Activated B cell treated with CpG ODN at 0.5 μM for 24 hours (primary cell): ENCODE measurements at regions of chr19 and their contacts with region 1.

Region 1: GRCh38 chr19:18919086-18919899 is at the starts of genes COPE and DDX49:
- DNase-seq: peak; percentile 94
- ATAC-seq: peak; percentile 96
- H3K4me3 Mint-ChIP-seq: peak within 1 kb of the TSS; percentile 91
- H3K27ac Mint-ChIP-seq: peak within 1 kb of the TSS; percentile 60
- H3K4me1 Mint-ChIP-seq: peaks cover 46% of the 10 kb centered on the region
- H3K27me3 Mint-ChIP-seq: no peaks in the 10 kb centered on the region
- CTCF ChIP-seq: no peak
- total RNA-seq, gene COPE: 182 and 253 TPM in 2 replicates
- total RNA-seq, gene DDX49: 49.0 and 53.6 TPM in 2 replicates

Region 2: DNA sequence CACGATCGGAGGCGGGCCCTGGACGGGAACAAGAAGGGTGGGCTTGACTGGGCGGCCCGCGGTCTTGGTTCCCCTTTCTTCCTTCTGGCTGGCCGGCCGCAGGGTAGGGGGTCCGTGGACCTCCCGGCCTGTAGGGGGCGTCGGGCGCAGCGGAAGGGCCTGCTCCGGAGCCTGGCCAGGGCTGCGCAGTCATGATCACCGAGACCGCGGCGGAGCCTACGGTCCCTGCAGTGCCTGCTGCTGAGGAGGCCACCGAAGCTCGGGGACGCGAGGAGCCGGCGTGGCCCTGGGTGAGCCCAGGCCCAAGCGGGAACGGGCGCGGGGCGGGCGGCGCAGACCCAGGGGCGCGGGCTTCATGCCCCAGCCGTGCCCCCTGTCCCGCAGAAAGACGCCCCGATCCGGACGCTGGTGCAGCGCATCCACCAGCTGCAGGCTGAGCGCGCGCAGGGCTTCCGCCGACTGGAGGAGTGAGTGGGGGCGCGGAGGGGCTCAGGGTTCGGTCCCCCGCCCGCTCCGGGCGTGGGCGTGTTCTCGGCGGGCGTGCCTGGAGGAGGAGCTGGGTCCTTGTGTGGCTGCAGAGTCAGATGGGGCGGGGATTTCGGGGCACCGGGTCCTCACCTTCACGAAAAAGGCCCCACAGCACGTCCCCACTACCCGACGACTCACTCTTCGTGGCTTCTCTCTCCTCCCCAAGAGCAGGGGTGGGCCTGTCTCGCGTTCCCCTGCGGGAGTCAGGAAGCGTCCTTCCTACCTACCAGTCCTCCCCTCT is 330.5 kb before region 1 on chr19 and contains the start of gene REX1BD:
- CTCF ChIA-PET with region 1: no interaction called
- POLR2A ChIA-PET with region 1: interaction called, 14 read pairs
- intact Hi-C with region 1: loop called (anchors 5 kb)
- DNase-seq: peak; percentile 79
- ATAC-seq: peak; percentile 79
- H3K4me3 Mint-ChIP-seq: peak within 1 kb of the TSS; percentile 87
- H3K27ac Mint-ChIP-seq: peak within 1 kb of the TSS; percentile 83
- H3K4me1 Mint-ChIP-seq: peaks cover 41% of the 10 kb centered on the region
- H3K27me3 Mint-ChIP-seq: peaks cover 2% of the 10 kb centered on the region
- CTCF ChIP-seq: peak; percentile 61
- total RNA-seq, gene REX1BD: 83.7 and 85.9 TPM in 2 replicates

Region 3: DNA sequence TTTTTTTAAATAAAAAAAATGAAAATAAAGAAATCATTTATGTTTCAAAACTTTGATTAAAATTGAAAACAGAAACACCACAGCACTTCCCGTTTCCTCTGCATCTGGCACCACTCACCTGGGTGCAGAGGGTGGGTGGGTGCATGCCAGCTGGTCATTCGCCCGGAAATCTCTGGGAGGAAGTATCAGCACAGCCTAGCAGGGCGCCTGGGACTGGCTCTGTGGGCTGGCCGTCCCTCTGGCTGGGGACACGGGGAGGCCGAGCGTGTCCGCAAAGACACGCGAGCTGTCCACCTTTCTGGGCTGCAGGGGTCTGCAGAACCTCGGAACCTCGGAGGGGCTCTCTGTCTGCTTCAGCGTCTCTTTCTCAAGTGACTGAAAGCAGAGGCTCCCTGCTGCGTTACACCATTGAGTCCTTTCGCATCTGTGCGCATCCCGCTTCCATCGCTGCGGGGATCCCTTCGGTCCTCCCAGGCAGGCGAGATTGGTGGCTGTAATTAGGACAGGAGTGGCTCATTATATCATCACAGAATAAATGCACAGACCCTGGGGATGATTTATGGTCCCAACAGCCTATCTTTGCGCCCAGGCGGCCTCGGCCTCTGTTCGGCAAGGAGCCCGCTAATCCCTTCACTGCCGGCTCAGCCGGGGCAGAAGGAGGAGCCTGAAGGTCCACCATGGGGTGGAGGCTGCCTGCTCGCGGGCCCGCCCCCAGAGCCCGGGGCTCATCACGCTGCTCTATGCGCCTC is 218.6 kb before region 1 on chr19:
- CTCF ChIA-PET with region 1: no interaction called
- POLR2A ChIA-PET with region 1: no interaction called
- intact Hi-C with region 1: loop called (anchors 5 kb)
- DNase-seq: peak; percentile 63
- ATAC-seq: peak; percentile 87
- H3K4me3 Mint-ChIP-seq: peak overlapping the region; percentile 85
- H3K27ac Mint-ChIP-seq: peak overlapping the region; percentile 95
- H3K4me1 Mint-ChIP-seq: peaks cover 46% of the 10 kb centered on the region
- H3K27me3 Mint-ChIP-seq: no peaks in the 10 kb centered on the region
- CTCF ChIP-seq: no peak

Region 4: DNA sequence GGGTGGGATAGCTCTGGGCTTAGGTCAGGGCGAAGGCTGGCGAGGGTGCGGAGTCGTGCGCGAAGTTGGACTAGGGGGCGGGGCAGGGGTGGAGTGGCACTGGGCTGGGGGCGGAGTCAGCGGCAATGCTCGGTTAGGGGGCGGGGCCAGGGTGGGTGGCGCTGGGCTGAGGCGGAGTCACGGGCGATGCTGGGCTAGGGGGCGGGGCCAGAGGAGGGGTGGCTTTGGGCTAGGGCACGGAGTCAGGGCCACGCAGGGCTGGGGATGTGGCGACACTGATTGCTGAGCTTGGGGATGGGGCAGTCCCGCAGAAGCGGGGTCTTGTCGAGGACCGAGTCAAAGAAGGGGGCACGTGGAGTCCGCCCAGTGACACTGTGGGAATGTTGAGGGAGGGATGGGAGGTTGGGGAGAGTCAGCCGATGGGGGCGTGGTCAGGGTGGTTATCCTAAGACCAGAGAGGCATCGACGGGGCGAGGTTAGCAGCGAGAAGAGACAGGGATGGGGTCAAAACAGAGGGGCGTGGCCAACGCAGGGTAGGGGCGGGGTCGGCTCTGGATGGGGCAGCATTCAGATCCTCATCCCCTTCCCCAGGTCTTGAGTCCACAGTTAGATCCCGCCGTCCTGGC is 13.0 kb after region 1 on chr19:
- CTCF ChIA-PET with region 1: no interaction called
- POLR2A ChIA-PET with region 1: interaction called, 13 read pairs
- intact Hi-C with region 1: loop called (anchors 1 kb)
- DNase-seq: peak; percentile 61
- ATAC-seq: peak; percentile 98
- H3K4me3 Mint-ChIP-seq: peak overlapping the region; percentile 77
- H3K27ac Mint-ChIP-seq: no peak overlapping the region
- H3K4me1 Mint-ChIP-seq: peaks cover 14% of the 10 kb centered on the region
- H3K27me3 Mint-ChIP-seq: peaks cover 10% of the 10 kb centered on the region
- CTCF ChIP-seq: no peak

Region 5: GRCh38 chr19:19110410-19111135 is 191.3 kb after region 1 on chr19:
- CTCF ChIA-PET with region 1: no interaction called
- POLR2A ChIA-PET with region 1: interaction called, 10 read pairs
- intact Hi-C with region 1: no loop called
- DNase-seq: no peak
- ATAC-seq: peak; percentile 60
- H3K4me3 Mint-ChIP-seq: no peak overlapping the region
- H3K27ac Mint-ChIP-seq: no peak overlapping the region
- H3K4me1 Mint-ChIP-seq: peaks cover 26% of the 10 kb centered on the region
- H3K27me3 Mint-ChIP-seq: no peaks in the 10 kb centered on the region
- CTCF ChIP-seq: no peak

Region 6: GRCh38 chr19:19261350-19262189 is 342.3 kb after region 1 on chr19:
- CTCF ChIA-PET with region 1: no interaction called
- POLR2A ChIA-PET with region 1: interaction called, 10 read pairs
- intact Hi-C with region 1: no loop called
- DNase-seq: peak; percentile 23
- ATAC-seq: peak; percentile 80
- H3K4me3 Mint-ChIP-seq: peak overlapping the region; percentile 56
- H3K27ac Mint-ChIP-seq: peak overlapping the region; percentile 47
- H3K4me1 Mint-ChIP-seq: peaks cover 13% of the 10 kb centered on the region
- H3K27me3 Mint-ChIP-seq: peaks cover 35% of the 10 kb centered on the region
- CTCF ChIP-seq: no peak